ENCODE measurements at regions of chr11 and their contacts with region 1.

Region 1: GRCh38 chr11:66051766-66052663 is at the start of gene SF3B2:
- DNase-seq: peak; percentile 99
- ATAC-seq: peak; percentile 99
- H3K4me3 Mint-ChIP-seq: peak within 1 kb of the TSS; percentile 91
- H3K27ac Mint-ChIP-seq: peak within 1 kb of the TSS; percentile 95
- H3K4me1 Mint-ChIP-seq: peaks cover 36% of the 10 kb centered on the region
- H3K27me3 Mint-ChIP-seq: peaks cover 4% of the 10 kb centered on the region
- total RNA-seq, gene SF3B2: 265 to 270 TPM

Region 2: GRCh38 chr11:65565624-65566453 is 486.2 kb before region 1 on chr11:
- CTCF ChIA-PET with region 1: no interaction called
- POLR2A ChIA-PET with region 1: no interaction called
- intact Hi-C with region 1: no loop called
- DNase-seq: peak; percentile 60
- ATAC-seq: peak; percentile 10
- H3K4me3 Mint-ChIP-seq: peak overlapping the region; percentile 49
- H3K27ac Mint-ChIP-seq: peak overlapping the region; percentile 94
- H3K4me1 Mint-ChIP-seq: peaks cover 42% of the 10 kb centered on the region
- H3K27me3 Mint-ChIP-seq: no peaks in the 10 kb centered on the region

Region 3: DNA sequence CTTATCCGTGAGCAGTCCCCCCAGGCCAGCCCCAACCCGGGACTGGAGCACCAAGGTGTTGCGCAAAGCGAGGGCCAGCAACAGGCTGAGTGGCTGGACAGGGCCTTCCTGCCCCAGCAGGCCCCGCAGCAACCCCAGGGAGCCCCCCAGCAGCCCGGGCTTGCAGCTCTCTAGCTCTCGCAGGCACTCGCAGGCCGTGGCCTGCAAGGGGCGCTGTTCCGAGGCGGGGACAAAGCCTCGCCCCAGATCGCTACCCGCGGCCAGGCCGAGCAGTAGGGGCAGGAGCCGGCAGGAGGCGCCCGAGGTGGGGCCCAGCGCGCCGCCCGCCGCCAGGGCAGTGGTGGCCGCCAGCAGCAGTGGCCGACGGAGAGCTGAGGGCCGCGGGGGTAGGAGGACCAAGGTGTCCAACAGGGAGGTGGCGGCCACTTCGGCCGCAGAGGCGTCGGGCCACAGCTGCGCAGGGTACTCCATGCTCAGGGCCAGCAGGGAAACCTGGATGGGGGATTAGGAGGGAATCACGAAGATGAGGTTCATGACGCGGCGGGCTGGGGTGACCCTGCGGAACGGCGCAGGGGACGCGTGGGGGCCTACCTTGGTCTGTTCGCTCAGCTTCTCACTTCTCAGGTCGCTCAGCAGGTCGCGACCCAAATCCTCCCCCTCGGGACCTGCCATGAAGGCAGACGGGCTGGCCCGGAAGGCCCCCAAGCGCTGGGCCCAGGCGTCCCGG is 272.0 kb before region 1 on chr11:
- CTCF ChIA-PET with region 1: no interaction called
- POLR2A ChIA-PET with region 1: no interaction called
- intact Hi-C with region 1: loop called in 1 of 2 experiments (anchors 2 kb)
- DNase-seq: peak; percentile 94
- ATAC-seq: peak; percentile 81
- H3K4me3 Mint-ChIP-seq: peak overlapping the region; percentile 87
- H3K27ac Mint-ChIP-seq: peak overlapping the region; percentile 83
- H3K4me1 Mint-ChIP-seq: peaks cover 27% of the 10 kb centered on the region
- H3K27me3 Mint-ChIP-seq: peaks cover 10% of the 10 kb centered on the region

Region 4: DNA sequence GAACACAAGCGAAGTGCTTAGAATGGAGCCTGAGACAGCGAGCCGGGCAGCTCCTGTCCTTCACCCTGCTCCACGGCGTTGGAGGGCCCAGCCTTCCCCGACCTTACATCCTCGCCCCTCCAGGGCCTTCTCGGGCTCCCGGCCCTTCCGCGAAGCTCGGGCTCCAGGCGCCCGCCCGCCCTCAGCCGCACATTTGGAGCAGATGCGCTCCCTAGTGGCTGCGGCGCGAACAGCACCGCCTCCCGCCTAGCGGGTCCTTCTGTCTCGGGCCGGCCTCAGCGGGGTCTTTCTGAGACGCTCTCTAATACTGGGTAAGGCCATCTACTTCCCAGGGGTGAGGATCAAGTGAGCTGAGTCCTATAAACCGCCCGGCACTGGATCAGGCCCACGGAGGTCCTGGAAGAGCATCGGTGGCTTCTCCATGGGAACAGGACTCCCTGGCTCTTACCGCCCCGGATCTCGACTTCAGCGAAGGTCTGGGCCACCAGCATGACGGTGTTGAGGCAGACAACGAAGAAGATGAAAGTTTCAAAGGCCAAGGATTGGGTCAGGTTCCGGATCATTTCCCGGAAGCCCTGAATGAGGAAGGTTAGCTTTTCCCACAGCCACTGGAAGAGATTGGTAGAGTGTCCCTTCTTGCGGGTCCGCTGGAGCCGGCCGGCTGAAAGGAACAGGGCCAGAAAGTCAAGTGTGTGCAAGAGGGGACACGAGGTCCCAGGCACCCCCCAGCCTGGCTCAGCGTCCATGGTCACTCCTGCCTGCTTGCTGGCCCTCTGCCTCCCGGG is 29.4 kb before region 1 on chr11:
- CTCF ChIA-PET with region 1: interaction called, 10 read pairs
- POLR2A ChIA-PET with region 1: no interaction called
- intact Hi-C with region 1: no loop called
- DNase-seq: peak; percentile 89
- ATAC-seq: peak; percentile 94
- H3K4me3 Mint-ChIP-seq: no peak overlapping the region
- H3K27ac Mint-ChIP-seq: no peak overlapping the region
- H3K4me1 Mint-ChIP-seq: peaks cover 8% of the 10 kb centered on the region
- H3K27me3 Mint-ChIP-seq: peaks cover 7% of the 10 kb centered on the region

Region 5: DNA sequence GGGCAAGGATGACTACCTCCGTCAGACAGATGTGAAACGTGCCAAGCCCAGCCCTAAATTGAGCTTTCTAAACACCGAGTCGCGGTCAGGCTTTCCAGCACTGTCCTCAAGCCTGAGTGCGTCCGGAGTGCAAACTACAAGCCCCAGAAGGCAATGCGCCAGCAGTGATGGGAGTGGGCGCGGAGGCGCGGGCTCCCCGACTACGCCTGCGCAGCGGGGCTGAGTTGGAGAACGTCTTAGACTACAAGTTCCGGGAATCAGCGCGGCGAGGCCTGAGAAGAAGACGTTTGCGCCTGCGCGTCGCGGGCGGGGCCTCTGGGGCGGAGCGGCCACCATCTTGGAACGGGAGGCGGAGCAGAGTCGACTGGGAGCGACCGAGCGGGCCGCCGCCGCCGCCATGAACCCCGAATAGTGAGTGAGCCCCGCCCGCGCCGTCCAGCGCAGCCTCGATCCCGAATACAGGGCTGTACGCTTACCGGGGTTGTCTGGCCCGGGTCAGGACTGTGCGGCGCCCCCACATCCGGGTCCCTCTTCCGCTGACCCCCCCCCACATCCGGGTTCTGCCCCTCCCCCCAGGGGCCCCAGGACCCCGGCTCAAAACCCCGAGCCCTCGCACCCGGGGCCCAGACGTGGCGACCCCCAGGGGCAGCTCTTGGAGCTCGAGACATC is 216.4 kb after region 1 on chr11 and contains the start of gene RAB1B:
- CTCF ChIA-PET with region 1: interaction called, 4 read pairs
- POLR2A ChIA-PET with region 1: no interaction called
- intact Hi-C with region 1: loop called (anchors 1 to 2 kb)
- DNase-seq: peak; percentile 100
- ATAC-seq: peak; percentile 88
- H3K4me3 Mint-ChIP-seq: peak within 1 kb of the TSS; percentile 100
- H3K27ac Mint-ChIP-seq: peak within 1 kb of the TSS; percentile 97
- H3K4me1 Mint-ChIP-seq: peaks cover 28% of the 10 kb centered on the region
- H3K27me3 Mint-ChIP-seq: no peaks in the 10 kb centered on the region
- total RNA-seq, gene RAB1B: 114 to 147 TPM

Region 6: DNA sequence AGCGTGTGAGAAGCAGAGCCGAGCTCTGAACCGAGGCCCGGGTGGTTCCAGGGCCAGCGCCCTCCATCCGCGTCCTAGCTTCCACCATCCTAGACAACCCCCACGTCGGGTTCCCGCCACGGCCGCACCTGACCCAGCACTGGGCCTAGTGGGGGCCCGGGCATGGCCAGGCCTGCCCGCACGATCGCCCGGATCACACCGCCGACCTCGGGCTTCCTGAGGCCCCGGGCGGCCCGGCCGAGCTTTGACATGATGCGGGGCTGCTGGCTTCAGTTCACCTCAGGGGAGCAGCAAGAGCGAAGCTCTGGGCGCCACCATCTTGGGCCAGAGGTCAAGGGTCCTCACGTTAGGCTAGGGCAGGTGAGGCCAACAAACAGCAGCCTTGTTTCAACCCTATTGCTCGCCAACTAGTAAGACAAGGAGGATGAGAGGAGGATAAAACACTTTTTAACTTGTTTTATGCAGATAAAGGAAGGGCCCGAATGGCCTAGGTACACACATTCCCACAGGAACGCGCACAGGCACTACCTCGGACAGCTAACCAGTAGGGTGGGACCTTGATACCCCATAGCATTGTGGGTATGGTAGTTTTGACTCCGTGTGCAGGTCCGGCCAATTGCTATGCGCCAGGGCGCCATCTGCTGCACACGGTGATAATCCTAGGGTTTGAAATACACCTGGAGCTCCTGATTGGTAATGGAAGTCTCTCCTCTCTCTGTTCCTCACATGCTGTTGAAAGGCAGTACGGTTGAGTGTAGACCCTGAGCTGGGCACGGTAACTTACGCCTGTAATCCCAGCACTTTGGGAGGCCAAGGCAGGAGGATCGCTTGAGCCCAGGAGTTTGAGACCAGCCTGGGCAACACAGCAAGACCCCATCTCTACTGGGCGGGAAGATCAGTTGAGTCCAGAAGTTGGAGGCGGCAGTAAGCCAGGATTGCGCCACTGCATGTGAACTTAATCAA is 386.8 kb after region 1 on chr11 and contains the start of gene MRPL11:
- CTCF ChIA-PET with region 1: no interaction called
- POLR2A ChIA-PET with region 1: no interaction called
- intact Hi-C with region 1: loop called in 1 of 2 experiments (anchors 5 kb)
- DNase-seq: peak; percentile 94
- ATAC-seq: peak; percentile 99
- H3K4me3 Mint-ChIP-seq: peak within 1 kb of the TSS; percentile 85
- H3K27ac Mint-ChIP-seq: peak within 1 kb of the TSS; percentile 98
- H3K4me1 Mint-ChIP-seq: peaks cover 8% of the 10 kb centered on the region
- H3K27me3 Mint-ChIP-seq: no peaks in the 10 kb centered on the region
- total RNA-seq, gene MRPL11: 115 to 120 TPM

Measured in activated CD4-positive, alpha-beta T cell treated with anti-CD3 and anti-CD28 coated beads for 36 hours (primary cell).